HEK293 (cell line): ENCODE measurements at regions of chr6 and their contacts with region 1.

Region 1: DNA sequence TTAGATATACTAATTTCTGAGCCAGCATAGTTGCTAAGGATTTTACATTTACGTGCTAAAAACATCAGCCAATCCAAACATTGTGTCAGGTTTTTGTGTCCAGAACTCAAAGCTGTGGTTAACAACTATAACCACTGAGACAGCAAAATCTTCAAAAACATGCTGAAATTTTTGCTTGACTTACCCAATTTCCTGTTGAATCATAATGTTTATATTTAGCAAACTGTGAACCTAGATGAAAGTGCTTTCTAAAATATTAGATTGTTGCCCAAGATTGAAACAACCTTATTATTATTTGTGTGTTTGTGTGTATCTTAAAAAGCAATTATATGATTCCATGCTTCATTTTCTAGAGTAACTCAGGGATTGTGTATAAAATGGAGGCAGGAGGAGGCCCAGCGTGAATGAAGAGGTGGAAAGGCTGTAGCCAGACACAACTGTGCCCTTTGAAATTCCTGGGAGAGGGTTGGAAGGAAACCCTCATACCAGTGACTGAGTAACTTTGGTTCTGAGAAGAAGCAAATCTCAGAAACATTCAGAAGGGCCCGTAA is 48.0 kb downstream of the ARMC2 start:
- H3K4me3 ChIP-seq: no peak overlapping the region
- H3K27ac ChIP-seq: no peak overlapping the region
- H3K4me1 ChIP-seq: no peaks in the 10 kb centered on the region
- CTCF ChIP-seq: no peak

Region 2: DNA sequence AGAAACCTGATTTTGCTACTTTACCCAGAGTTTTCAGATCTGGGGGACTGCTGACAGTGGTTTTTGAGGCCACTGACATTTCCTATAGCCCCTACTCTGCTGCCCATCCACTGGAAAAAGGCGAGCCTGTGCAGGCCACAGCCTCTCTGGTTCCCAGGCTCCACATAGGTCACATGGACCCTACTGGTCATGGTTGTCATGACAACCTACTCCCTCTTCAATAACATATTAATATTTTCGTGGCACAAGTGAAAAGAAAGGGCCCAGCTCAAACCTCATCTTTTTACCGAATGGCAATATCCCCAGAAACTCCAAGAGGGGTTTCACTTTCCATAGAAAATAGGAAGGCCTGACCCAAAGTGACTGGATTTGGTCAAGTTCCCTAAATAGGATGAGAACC is 346.5 kb before region 1 on chr6:
- CTCF ChIA-PET with region 1: interaction called, 109 read pairs
- POLR2A ChIA-PET with region 1: no interaction called
- H3K4me3 ChIP-seq: no peak overlapping the region
- H3K27ac ChIP-seq: no peak overlapping the region
- H3K4me1 ChIP-seq: no peaks in the 10 kb centered on the region
- CTCF ChIP-seq: no peak

Region 3: DNA sequence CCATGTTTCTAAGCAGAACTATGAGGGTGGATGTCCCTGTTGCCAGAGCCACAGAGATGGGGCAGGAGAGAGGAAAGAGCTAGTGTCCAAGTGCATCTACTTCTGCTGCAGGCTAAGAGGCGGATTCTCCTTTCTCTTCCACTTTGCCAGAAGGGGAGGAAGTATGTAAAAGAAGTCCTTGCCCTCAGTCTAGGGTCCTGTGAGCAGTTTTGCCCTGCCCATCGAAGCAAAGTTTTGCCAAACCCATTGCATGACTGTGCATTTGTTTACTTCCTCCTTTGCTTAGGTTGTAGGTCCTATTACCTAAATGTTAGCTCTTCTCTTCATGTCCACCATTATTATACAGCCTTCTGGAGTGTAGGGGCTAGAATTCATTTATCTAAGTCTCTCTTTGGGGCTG is 154.1 kb before region 1 on chr6:
- CTCF ChIA-PET with region 1: no interaction called
- POLR2A ChIA-PET with region 1: no interaction called
- H3K4me3 ChIP-seq: no peak overlapping the region
- H3K27ac ChIP-seq: no peak overlapping the region
- H3K4me1 ChIP-seq: peaks cover 6% of the 10 kb centered on the region
- CTCF ChIP-seq: no peak

Region 4: GRCh38 chr6:108883172-108883571 is 13.0 kb before region 1 on chr6:
- CTCF ChIA-PET with region 1: interaction called, 11 read pairs
- POLR2A ChIA-PET with region 1: no interaction called
- H3K4me3 ChIP-seq: no peak overlapping the region
- H3K27ac ChIP-seq: no peak overlapping the region
- H3K4me1 ChIP-seq: no peaks in the 10 kb centered on the region
- CTCF ChIP-seq: no peak